ENCODE measurements at regions of chr3 and their contacts with region 1.

Region 1: GRCh38 chr3:187745201-187746058 is at the start of gene BCL6:
- DNase-seq: peak; percentile 94
- ATAC-seq: peak; percentile 42
- H3K4me3 Mint-ChIP-seq: peak within 1 kb of the TSS; percentile 100
- H3K27ac Mint-ChIP-seq: peak within 1 kb of the TSS; percentile 100
- H3K4me1 Mint-ChIP-seq: peaks cover 55% of the 10 kb centered on the region
- H3K27me3 Mint-ChIP-seq: no peaks in the 10 kb centered on the region
- total RNA-seq, gene BCL6: 11.8 to 12.6 TPM

Region 2: GRCh38 chr3:187519428-187519890 is 226.0 kb before region 1 on chr3:
- CTCF ChIA-PET with region 1: no interaction called
- POLR2A ChIA-PET with region 1: no interaction called
- DNase-seq: no peak
- ATAC-seq: no peak
- H3K4me3 Mint-ChIP-seq: no peak overlapping the region
- H3K27ac Mint-ChIP-seq: no peak overlapping the region
- H3K4me1 Mint-ChIP-seq: no peaks in the 10 kb centered on the region
- H3K27me3 Mint-ChIP-seq: peaks cover 8% of the 10 kb centered on the region

Region 3: DNA sequence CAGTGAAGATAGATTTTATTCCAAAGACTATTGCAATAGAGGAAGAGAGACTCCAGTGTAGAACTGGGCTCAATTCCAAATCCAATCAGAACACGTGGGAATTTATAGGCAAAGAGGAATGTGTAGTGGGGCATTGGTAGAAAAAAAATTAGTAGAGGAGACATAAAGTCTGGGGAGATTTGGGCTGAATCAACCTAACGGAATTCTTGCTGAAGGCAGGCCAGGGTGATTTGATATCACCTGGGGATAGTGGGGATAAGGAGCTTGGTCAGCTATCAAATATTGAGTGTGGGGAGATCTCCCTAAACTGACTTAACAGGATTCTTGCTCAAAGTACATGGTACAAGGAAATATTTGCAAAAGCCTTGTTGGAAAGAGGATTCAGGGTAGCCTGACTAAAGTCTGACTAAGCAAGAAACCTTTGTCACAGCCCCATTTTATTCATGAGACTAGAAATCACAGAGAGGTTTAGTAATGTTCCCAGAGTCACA is 104.8 kb before region 1 on chr3:
- CTCF ChIA-PET with region 1: no interaction called
- POLR2A ChIA-PET with region 1: no interaction called
- DNase-seq: no peak
- ATAC-seq: no peak
- H3K4me3 Mint-ChIP-seq: no peak overlapping the region
- H3K27ac Mint-ChIP-seq: no peak overlapping the region
- H3K4me1 Mint-ChIP-seq: no peaks in the 10 kb centered on the region
- H3K27me3 Mint-ChIP-seq: peaks cover 21% of the 10 kb centered on the region

Region 4: DNA sequence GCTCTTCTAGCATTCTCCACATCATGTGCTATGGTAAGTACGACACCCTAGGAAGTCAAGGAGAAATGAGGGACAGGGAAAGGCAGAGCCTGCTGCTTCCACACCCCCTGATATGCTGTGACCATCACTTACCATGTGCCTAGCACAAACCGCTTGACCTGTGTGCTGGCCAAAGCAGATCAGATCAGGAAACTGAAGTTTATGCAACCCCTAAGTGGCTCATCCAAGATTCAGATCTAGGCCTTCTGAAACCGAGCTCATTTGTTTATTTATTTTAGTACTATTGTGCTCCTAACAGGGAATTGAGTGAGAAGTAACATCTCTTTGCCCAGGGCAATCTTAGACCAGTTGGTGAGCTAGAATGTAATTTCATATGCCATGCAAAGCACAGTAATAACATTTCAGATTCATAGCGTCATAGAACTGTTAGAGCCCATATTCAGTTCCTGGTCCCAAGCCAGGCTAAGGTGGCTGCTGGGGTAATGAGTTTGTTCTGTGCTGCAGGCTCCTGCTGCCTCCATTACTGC is 42.9 kb before region 1 on chr3 and contains the start of gene RTP2:
- CTCF ChIA-PET with region 1: no interaction called
- POLR2A ChIA-PET with region 1: no interaction called
- DNase-seq: no peak
- ATAC-seq: no peak
- H3K4me3 Mint-ChIP-seq: no peak within 1 kb of the TSS
- H3K27ac Mint-ChIP-seq: no peak within 1 kb of the TSS
- H3K4me1 Mint-ChIP-seq: no peaks in the 10 kb centered on the region
- H3K27me3 Mint-ChIP-seq: peaks cover 10% of the 10 kb centered on the region
- total RNA-seq, gene RTP2: not detected

Region 5: DNA sequence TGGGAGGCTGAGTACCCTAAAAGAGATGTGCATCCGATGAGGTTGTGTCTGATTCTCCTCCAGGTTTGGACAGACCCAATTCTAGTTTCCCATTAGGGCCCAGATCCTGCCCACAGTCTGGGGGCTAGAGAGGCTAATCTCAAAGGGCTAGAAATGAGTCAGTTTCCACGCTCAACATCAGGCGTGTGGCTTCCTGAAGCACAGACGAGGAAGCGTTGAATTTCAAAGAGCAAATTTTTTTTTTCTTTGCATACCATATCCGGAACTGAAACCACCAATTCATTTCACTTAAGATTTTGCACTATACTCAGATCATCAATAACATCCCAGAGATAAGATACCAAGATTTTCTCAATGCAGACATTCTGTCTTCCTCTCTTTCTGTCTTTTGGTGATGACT is 173.6 kb after region 1 on chr3:
- CTCF ChIA-PET with region 1: interaction called, 32 read pairs
- POLR2A ChIA-PET with region 1: interaction called, 3 read pairs
- DNase-seq: peak; percentile 83
- ATAC-seq: peak; percentile 89
- H3K4me3 Mint-ChIP-seq: peak overlapping the region; percentile 78
- H3K27ac Mint-ChIP-seq: peak overlapping the region; percentile 98
- H3K4me1 Mint-ChIP-seq: peaks cover 86% of the 10 kb centered on the region
- H3K27me3 Mint-ChIP-seq: no peaks in the 10 kb centered on the region

Region 6: DNA sequence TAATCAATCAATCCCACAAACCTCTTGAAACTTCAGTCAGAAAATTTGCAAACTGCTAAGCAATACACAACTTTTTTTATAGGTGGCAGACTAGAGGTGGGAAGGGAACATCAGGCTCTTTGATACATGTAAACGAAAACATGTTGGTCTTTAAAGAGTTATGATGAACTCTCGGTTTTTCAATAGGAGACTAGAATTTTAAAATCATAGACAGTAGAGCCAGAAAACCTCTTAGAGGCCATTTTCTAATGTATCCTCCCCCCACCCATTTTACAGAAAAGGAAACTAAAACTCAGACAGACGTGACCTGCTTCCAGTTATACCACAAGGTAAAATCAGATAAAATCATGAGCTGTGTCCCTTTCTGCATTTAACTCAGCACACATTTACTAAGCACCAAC is 229.4 kb after region 1 on chr3:
- CTCF ChIA-PET with region 1: interaction called, 56 read pairs
- POLR2A ChIA-PET with region 1: interaction called, 59 read pairs
- DNase-seq: no peak
- ATAC-seq: peak; percentile 67
- H3K4me3 Mint-ChIP-seq: peak overlapping the region; percentile 54
- H3K27ac Mint-ChIP-seq: peak overlapping the region; percentile 93
- H3K4me1 Mint-ChIP-seq: peaks cover 81% of the 10 kb centered on the region
- H3K27me3 Mint-ChIP-seq: no peaks in the 10 kb centered on the region

Region 7: GRCh38 chr3:188051801-188052168 is 306.4 kb after region 1 on chr3:
- CTCF ChIA-PET with region 1: interaction called, 17 read pairs
- POLR2A ChIA-PET with region 1: interaction called, 5 read pairs
- DNase-seq: no peak
- ATAC-seq: no peak
- H3K4me3 Mint-ChIP-seq: no peak overlapping the region
- H3K27ac Mint-ChIP-seq: no peak overlapping the region
- H3K4me1 Mint-ChIP-seq: peaks cover 44% of the 10 kb centered on the region
- H3K27me3 Mint-ChIP-seq: no peaks in the 10 kb centered on the region

Region 8: DNA sequence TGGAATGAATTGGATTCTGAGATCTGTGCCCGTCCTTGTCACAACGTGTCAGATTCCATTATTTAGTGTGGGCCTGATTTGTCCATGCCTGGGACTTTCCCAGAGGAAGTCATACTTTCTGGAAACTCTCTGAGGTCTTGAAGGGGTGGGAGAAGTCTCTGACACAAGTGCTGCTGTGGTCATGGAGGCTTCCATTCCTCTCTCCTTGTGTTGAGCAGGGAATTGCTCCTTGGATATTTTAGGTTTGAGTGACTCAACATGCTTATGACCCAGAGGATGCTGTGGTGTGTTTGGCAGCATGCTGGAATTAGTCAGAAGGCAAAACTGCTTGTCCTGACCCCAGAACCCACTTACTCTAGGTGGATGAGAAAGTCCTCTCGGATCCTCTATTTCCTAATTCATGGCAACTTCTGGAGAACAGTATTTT is 540.7 kb after region 1 on chr3:
- CTCF ChIA-PET with region 1: interaction called, 36 read pairs
- POLR2A ChIA-PET with region 1: interaction called, 6 read pairs
- DNase-seq: no peak
- ATAC-seq: no peak
- H3K4me3 Mint-ChIP-seq: no peak overlapping the region
- H3K27ac Mint-ChIP-seq: no peak overlapping the region
- H3K4me1 Mint-ChIP-seq: peaks cover 24% of the 10 kb centered on the region
- H3K27me3 Mint-ChIP-seq: no peaks in the 10 kb centered on the region

Region 9: DNA sequence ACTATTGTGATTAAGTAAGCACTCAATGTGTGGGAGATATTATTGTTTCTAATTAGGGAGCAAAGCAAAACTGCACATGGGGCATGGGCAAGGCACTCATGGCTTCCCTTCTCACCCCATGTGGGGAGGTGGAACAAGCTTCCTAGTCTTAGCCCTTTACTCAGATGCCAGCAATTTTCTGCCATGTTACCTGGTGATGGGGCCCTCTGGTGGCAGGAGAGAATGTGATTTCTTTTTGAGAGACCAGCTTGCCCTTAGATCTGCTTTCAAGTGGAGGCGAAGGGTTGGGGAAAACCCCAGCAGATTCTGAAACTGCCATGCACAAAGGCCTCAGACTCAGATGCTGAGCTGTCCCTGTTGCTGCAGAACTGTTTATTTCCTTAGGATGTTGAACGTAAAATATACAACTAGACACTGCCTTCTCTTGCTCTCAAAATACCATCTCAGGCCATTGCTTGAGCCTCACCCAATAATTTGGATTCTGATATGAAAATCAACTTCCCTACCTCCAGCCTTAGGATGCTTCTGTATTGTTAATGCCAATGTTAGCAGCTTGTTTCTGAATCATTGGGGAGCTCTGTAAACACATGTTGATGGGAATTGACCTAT is 1296.2 kb after region 1 on chr3:
- CTCF ChIA-PET with region 1: interaction called, 104 read pairs
- POLR2A ChIA-PET with region 1: interaction called, 16 read pairs
- DNase-seq: peak; percentile 83
- ATAC-seq: peak; percentile 97
- H3K4me3 Mint-ChIP-seq: no peak overlapping the region
- H3K27ac Mint-ChIP-seq: peak overlapping the region; percentile 48
- H3K4me1 Mint-ChIP-seq: peaks cover 42% of the 10 kb centered on the region
- H3K27me3 Mint-ChIP-seq: no peaks in the 10 kb centered on the region